ENCODE measurements at regions of chr16 and their contacts with region 1.

Region 1: DNA sequence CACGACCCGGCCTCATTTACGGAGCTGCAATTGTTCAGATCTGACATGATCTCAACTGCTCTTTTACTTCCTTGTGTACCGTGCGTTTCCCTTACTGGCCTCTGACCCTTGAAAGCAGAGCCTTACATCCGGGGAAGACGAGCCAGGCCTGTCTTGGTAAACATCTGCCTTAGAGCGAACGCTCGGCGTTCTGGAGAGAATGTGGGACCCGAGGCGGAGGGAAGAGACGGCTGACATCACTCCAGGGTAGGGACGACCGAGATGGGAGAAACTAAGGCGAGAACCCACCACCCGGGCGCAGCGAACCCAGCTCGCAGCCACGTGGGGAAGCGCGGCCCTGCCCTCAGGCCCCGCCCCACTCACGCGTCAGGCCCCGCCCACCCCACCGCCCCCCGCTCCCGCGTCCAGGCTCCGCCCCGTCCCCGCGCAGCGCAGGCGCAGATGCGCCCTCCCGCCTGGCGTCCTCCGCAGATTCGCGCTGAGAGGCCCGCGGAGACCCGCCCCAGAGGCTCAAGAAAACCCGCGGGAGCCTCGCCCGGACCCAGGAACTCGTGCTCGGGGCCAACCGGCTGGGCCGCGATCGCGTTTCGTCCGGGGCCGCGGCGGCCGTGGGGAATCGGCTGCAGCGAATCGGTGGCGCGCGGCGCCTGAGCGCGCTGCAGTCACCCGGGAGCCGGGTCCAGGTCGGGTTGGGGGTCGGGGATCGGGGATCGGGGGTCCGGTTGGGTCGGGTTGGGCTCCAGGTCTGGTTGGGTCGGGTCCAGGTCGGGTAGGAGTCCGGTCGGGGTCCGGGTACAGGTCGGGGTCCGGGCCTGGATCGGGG is at the start of gene TELO2:
- DNase-seq: peak; percentile 64 to 68
- ATAC-seq: peak; percentile 87
- H3K4me3 ChIP-seq: peak within 1 kb of the TSS; percentile 78 to 95 (median 83)
- H3K27ac ChIP-seq: peak within 1 kb of the TSS; percentile 84 to 98 (median 92)
- H3K4me1 ChIP-seq: peaks cover 15 to 20% of the 10 kb centered on the region in 2 donors
- H3K27me3 ChIP-seq: no peaks in the 10 kb centered on the region
- CTCF ChIP-seq: no peak
- POLR2A ChIP-seq: peak; percentile 27 to 53
- total RNA-seq, gene TELO2: 2.9 to 11.2 (median 9.8) TPM

Region 2: DNA sequence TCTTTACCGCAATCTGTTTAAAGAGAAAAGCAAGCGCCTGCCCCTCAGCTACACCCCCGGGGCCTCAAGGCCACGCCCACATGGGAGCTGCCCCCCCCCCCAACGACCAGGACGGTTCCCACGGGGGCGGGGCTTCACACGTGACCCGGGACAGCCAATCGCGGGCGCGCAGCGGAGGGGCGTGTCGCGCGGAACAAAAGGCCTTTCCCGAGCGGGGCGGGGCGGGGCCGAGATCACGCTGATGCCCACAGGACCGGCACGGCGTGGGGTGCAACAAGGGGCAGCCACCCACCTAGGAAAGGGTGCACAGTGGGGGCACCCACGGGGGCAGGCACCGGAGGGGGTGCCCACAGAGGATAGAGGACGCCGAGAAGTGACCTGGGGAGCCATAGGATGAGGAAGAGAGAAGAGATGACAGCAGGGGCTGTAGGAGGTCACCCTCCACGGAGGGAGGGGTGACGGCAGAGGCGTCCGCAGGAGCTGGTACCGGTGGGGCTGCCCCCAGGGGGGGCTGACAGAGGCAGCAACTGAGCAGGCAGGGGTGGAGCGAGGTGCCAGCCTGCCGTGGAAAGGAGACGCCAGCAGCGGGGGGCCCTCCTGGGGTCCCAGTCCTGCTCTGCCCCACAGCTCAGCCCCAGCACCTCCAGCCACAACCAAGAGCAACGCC is 84.8 kb before region 1 on chr16:
- in situ Hi-C with region 1: no loop called
- intact Hi-C with region 1: loop called (anchors 5 kb)
- DNase-seq: peak; percentile 84 to 91
- ATAC-seq: peak; percentile 90 to 94
- H3K4me3 ChIP-seq: peak overlapping the region; percentile 49 to 66 (median 59)
- H3K27ac ChIP-seq: peak overlapping the region; percentile 51 to 75 (median 66)
- H3K4me1 ChIP-seq: peaks cover 7 to 18% of the 10 kb centered on the region in 2 donors
- H3K27me3 ChIP-seq: no peaks in the 10 kb centered on the region
- CTCF ChIP-seq: no peak
- POLR2A ChIP-seq: no peak

Region 3: GRCh38 chr16:1430759-1431496 is 62.2 kb before region 1 on chr16 and contains the start of gene PERCC1:
- in situ Hi-C with region 1: no loop called
- intact Hi-C with region 1: no loop called
- DNase-seq: no peak
- ATAC-seq: no peak
- H3K4me3 ChIP-seq: no peak within 1 kb of the TSS
- H3K27ac ChIP-seq: peak within 1 kb of the TSS in 1 of 4 donors; percentile 51
- H3K4me1 ChIP-seq: no peaks in the 10 kb centered on the region
- H3K27me3 ChIP-seq: no peaks in the 10 kb centered on the region
- CTCF ChIP-seq: no peak
- POLR2A ChIP-seq: no peak
- total RNA-seq, gene PERCC1: not detected

Region 4: DNA sequence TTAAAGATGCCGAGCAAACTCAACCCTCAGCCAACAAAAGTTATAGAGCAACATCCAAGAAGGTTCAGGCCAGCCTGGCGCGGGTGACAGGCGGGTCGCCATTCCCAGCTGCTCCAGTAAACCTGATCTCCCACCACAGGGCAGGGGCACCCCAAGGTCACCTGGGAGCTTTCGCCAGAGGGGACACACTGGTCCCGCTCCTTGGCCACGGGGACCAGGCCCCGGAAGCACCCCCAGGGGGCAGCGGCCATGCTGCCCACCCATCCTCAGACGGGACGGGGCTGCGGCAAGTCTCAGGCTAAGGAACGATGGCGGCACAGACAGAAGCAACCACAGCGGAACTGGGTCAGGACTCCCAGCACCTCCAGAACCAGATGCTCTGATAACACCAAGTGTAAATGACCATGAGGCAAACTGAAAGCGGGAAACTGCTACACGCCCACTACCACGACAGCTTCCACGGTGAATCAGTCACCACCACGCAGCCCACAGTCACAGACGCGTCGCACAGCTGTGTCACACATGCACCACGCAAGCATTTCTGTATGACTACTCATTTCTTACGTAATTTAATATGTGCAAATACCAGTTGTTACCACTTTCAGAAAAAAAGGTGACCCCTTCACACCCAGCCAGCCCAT is 34.7 kb before region 1 on chr16:
- in situ Hi-C with region 1: no loop called
- intact Hi-C with region 1: no loop called
- DNase-seq: no peak
- ATAC-seq: no peak
- H3K4me3 ChIP-seq: no peak overlapping the region
- H3K27ac ChIP-seq: no peak overlapping the region
- H3K4me1 ChIP-seq: no peaks in the 10 kb centered on the region
- H3K27me3 ChIP-seq: no peaks in the 10 kb centered on the region
- CTCF ChIP-seq: no peak
- POLR2A ChIP-seq: no peak

Region 5: DNA sequence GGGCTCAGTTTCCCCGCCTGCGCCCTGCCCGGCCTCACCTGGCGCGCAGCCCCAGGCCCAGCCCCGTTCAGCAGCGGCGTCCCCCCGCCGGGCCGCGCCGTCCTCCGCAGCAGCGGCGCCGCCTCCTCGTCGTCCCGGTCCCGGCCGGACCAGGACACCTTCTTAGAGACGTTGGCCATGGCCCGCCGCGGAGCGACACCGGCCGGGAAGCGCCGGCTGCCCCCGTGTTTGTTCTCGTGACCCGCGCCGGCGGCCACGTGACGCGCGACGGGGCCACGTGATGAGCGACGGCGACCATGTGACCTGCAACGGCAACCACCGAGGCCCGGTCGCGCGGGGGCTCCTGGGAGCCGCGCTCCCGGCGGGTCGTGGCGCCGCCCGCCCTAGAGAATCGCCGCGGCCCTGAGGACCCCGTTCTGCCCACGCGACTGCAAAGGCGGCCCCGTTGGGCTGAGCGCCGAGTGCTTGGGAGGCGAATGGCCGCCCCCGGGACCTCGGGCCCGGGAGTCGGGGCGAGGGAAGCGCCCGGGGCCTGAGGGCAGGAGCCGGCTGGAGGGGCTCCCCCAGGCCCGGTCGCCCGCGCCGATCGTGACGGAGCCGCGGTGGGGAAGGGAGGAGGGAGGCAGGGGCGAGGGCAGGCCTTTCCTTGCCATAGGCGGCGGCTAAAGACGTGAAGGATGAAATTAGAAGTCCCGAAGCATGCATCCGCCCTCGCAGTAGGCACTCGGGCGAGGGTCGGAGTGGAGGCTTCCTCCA is 18.2 kb before region 1 on chr16 and contains the start of gene CLCN7:
- in situ Hi-C with region 1: no loop called
- intact Hi-C with region 1: loop called (anchors 1 kb)
- DNase-seq: peak; percentile 86 to 91
- ATAC-seq: peak; percentile 93 to 97
- H3K4me3 ChIP-seq: peak within 1 kb of the TSS; percentile 80 to 100 (median 86)
- H3K27ac ChIP-seq: peak within 1 kb of the TSS; percentile 90 to 98 (median 94)
- H3K4me1 ChIP-seq: peaks cover 14 to 27% of the 10 kb centered on the region in 2 donors
- H3K27me3 ChIP-seq: no peaks in the 10 kb centered on the region
- CTCF ChIP-seq: peak in 2 of 5 experiments; percentile 21 to 56
- POLR2A ChIP-seq: peak; percentile 95 to 97
- total RNA-seq, gene CLCN7: 24.8 to 45.8 (median 38.4) TPM

Region 6: DNA sequence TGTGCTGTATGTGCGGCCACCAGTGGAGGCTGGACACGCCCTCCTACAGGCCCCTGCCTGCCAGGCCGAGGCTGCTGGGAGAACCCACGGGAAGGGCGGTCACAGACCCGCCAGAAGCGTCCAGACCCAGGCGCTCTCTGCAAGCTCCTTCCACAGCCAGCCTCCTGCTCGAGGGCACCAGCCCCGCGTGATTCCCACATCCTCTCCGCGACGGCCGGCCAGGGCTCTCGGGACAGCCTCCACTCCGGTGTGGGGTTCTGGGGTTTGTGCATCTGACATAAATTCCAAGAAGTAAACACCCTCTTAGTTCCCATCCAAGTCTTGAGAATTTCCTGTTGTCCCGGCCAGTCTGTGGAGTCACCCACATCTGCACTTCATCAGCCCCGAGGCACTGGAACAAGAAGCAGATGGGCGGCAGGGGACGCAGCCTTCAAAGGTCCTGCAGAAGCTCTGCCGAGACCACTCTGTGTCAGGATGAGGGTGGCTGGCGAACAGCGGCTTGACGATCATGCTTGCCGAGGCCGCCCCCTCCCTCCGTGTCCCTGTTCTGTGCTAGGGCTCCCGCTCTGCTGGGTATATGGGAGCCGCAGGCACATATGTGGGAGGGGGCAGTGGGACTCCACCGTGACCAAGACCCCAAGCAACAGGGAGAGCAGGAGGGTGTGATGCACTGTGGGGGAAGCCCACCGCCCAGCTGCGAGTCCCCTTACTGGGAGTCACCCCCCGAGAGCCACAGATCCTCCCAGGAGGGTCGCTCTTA is 37.9 kb after region 1 on chr16:
- in situ Hi-C with region 1: no loop called
- intact Hi-C with region 1: loop called (anchors 2 kb)
- DNase-seq: peak; percentile 29 to 57
- ATAC-seq: peak; percentile 17 to 18
- H3K4me3 ChIP-seq: peak overlapping the region; percentile 31 to 74 (median 61)
- H3K27ac ChIP-seq: peak overlapping the region; percentile 86 to 94 (median 89)
- H3K4me1 ChIP-seq: peaks cover 15 to 21% of the 10 kb centered on the region in 2 donors
- H3K27me3 ChIP-seq: no peaks in the 10 kb centered on the region
- CTCF ChIP-seq: no peak
- POLR2A ChIP-seq: peak in 1 of 2 donors; percentile 51

Region 7: DNA sequence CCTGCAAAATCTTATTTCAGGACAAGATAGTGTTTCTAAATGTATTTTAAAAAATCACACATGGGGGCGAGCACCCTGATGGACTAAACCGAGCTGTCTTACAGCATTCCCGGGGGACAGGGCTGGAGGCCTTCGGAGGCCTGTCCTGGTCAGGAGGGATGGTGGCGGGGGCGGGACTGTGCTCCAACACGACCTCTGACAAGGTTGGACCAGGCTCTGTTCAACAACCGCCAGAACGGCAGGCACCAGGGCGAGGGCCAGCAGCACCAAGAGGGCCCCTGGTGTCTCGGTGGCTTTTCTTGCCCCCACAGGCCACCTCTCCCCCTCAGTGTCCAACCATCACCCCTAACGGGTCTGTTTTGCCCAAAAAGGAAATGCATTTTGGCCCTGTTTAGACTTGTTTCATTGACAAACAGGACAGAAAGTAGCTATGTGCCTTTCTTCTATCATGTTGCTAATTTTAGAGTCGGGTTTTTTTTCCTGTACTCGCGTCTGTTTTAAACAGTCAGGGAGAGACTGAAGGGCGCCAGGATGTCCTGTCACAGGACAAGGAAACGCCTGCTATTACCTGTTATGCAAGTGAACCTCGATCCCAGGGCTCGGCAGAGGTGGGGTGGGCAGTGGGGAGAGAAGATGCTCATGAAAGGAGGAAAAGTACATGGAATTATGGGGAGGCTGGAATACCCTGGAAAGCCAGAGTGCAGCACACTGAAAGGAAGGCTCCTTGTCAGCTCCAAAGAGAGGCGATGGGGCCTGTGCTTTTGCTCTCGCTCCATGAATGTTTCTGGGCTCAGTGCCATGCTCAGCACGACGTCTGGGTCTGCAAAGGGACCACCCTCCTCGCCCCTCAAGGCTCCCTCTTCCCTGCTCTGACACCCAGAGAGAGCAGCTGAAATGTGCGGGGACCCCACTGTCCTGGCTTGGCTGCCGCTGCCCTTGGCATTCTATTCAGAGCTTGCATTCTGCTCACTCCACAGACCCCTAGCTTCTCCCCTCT is 52.2 kb after region 1 on chr16:
- in situ Hi-C with region 1: no loop called
- intact Hi-C with region 1: loop called (anchors 5 kb)
- DNase-seq: peak; percentile 55 to 73
- ATAC-seq: peak; percentile 85
- H3K4me3 ChIP-seq: peak overlapping the region; percentile 22 to 43 (median 26)
- H3K27ac ChIP-seq: peak overlapping the region; percentile 86 to 90 (median 87)
- H3K4me1 ChIP-seq: peaks cover 45 to 61% of the 10 kb centered on the region in 2 donors
- H3K27me3 ChIP-seq: no peaks in the 10 kb centered on the region
- CTCF ChIP-seq: no peak
- POLR2A ChIP-seq: peak in 1 of 2 donors; percentile 10

Region 8: DNA sequence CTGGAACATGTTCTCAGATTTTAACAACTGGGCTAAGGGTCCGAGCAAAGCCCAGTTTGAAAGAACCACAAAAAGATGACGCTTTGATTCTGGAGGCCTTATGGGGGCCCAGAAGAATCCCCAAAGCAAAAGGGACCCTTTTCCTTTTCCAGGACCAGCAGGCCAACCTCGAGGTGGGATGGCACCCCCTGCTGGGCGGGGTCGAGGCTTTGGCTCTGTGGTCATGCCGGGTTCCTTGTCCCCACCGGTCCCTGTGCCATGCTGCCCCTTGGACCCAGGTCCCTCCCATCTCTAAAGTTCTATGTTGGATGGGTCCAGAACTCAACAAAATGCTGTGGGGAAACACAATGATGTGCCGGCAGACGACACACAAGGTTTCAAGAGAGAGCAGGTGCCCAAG is 71.2 kb after region 1 on chr16:
- in situ Hi-C with region 1: no loop called
- intact Hi-C with region 1: loop called (anchors 5 kb)
- DNase-seq: no peak
- ATAC-seq: no peak
- H3K4me3 ChIP-seq: no peak overlapping the region
- H3K27ac ChIP-seq: no peak overlapping the region
- H3K4me1 ChIP-seq: no peaks in the 10 kb centered on the region
- H3K27me3 ChIP-seq: no peaks in the 10 kb centered on the region
- CTCF ChIP-seq: peak in 4 of 5 experiments; percentile 6 to 47 (median 38)
- POLR2A ChIP-seq: no peak

Region 9: DNA sequence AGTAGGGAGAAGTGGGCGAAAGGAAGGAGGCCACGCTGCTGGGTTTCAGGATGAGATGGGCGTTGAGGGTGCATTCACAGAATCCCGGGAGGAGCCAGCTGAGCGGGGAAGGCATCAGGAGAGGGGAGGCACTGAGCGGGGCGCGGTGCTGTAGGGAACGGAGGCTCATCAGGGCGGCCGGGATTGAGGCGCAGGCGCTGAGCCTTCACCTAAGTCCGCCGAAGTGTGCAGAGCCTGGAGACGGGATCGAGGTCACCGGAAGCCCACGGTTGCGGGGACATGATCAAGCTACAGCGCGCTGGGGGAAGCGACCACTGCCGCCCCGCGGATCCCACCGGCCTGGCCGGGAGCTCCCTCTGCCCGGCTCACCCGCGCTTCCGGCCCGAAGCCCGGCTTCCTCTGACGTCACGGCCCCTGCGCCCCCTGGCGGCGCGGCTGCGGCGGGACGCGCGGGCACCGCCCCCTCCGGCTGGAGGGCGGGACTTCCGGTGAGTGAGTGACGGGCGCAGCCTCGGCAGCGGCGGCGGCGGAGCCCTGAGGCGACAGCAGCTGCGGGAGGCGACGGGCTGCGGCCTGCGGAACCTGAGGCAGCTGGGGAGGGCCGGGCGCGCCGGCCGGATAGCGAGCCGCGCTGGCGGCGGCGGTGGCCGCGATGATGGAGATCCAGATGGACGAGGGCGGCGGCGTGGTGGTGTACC is 212.7 kb after region 1 on chr16 and contains the start of gene MAPK8IP3:
- in situ Hi-C with region 1: no loop called
- intact Hi-C with region 1: loop called (anchors 10 kb)
- DNase-seq: peak; percentile 75 to 88
- ATAC-seq: peak; percentile 86 to 91
- H3K4me3 ChIP-seq: peak within 1 kb of the TSS; percentile 85 to 96 (median 88)
- H3K27ac ChIP-seq: peak within 1 kb of the TSS; percentile 89 to 94 (median 92)
- H3K4me1 ChIP-seq: peaks cover 28 to 31% of the 10 kb centered on the region in 2 donors
- H3K27me3 ChIP-seq: no peaks in the 10 kb centered on the region
- CTCF ChIP-seq: peak; percentile 68 to 100 (median 100)
- POLR2A ChIP-seq: peak; percentile 97 to 99
- total RNA-seq, gene MAPK8IP3: 6.5 to 22.6 (median 13.9) TPM